ENCODE measurements at regions of chr1 and their contacts with region 1.

Region 1: GRCh38 chr1:15141935-15142539 is 11.5 kb upstream of the TMEM51 start:
- DNase-seq: no peak
- ATAC-seq: peak; percentile 19
- H3K4me3 ChIP-seq: no peak overlapping the region
- H3K4me3 Mint-ChIP-seq: no peak overlapping the region
- H3K27ac ChIP-seq: no peak overlapping the region
- H3K27ac Mint-ChIP-seq: no peak overlapping the region
- H3K4me1 ChIP-seq: no peaks in the 10 kb centered on the region
- H3K4me1 Mint-ChIP-seq: peaks cover 0 to 6% (median 0%) of the 10 kb centered on the region in 7 donors
- H3K27me3 ChIP-seq: no peaks in the 10 kb centered on the region
- H3K27me3 Mint-ChIP-seq: peaks cover 51 to 71% (median 66%) of the 10 kb centered on the region in 5 donors

Region 2: DNA sequence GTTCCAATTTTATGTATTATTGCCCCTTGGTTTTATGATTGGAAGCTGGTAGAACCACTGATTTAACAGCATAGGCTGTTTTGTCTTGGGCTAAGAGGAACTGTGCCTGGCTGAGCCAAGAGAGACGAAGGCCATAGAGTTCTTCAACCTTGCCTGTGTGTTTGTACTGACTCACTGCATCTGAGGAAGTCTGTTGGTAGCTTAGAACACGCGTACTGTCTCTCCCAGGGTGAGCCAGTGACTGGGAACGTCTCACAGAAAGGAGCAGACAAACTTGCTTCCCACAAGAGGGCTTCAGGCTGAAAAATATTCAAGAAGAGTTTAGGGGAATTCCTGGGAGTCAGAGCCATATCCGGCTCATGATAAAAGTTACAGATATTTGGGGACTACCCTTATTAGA is 26.4 kb after region 1 on chr1:
- CTCF ChIA-PET with region 1: no interaction called
- POLR2A ChIA-PET with region 1: no interaction called
- intact Hi-C with region 1: loop called in 1 of 2 experiments (anchors 1 kb)
- DNase-seq: no peak
- ATAC-seq: peak; percentile 68
- H3K4me3 ChIP-seq: no peak overlapping the region
- H3K4me3 Mint-ChIP-seq: no peak overlapping the region
- H3K27ac ChIP-seq: no peak overlapping the region
- H3K27ac Mint-ChIP-seq: no peak overlapping the region
- H3K4me1 ChIP-seq: no peaks in the 10 kb centered on the region
- H3K4me1 Mint-ChIP-seq: peaks cover 0 to 7% (median 1%) of the 10 kb centered on the region in 7 donors
- H3K27me3 ChIP-seq: no peaks in the 10 kb centered on the region
- H3K27me3 Mint-ChIP-seq: peaks cover 6 to 35% (median 17%) of the 10 kb centered on the region in 5 donors

Measured in naive thymus-derived CD4-positive, alpha-beta T cell (primary cell).